Lower lobe of right lung (tissue), 2 donors: ENCODE measurements at regions of chr11 and their contacts with region 1.

Region 1: DNA sequence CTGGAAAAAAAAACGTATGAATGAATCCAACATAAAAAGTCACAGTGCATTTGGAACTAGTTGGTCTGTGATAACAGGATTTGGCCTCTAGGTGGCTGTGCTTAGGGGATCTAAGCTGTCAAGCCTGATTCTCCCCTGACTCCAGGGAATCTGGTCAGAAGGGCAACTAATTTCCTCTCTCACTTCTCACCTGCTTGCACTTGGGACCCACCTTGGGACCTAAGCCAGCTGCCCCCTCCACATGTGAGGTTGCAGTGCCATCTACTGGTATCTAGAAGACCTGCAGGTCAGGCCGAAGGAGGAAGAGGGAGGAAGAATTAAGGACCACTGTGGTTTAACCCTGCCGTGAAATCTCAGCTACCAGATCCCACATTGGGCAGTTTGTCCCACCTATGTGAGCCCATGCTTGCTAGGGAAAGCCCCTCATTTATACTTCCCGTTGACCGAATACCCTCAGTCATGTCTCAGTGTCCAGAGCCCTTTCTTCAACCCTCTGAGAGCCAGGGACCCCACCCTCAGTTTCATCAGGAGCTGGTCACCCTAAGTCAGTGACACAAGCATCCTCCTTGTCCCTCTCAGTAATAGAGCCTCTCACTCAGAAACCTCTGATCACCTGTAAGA is 33.2 kb upstream of the CAVIN3 start:
- DNase-seq: peak; percentile 60
- ATAC-seq: peak; percentile 81 to 88
- H3K4me3 ChIP-seq: no peak overlapping the region
- H3K27ac ChIP-seq: no peak overlapping the region
- H3K4me1 ChIP-seq: no peaks in the 10 kb centered on the region
- H3K27me3 ChIP-seq: no peaks in the 10 kb centered on the region
- CTCF ChIP-seq: peak; percentile 95

Region 2: DNA sequence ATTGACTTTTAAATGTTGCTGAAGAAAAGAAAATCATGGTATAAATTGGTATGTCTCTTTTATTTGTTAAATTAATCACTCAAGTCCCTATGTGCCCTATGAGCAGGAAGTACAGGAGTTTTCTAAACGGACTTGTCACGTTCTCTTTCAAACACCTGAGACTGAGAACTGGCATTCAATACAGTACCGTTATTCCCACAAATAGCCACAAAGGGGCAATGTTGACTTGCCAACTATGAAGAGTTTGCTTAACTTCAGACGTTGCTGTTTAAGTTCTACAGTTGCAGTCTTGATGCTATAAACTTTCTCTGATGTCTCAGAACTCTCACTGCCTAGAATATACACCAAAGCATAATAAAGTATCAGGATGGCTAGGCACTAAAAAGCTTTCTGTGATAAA is 330.5 kb before region 1 on chr11:
- intact Hi-C with region 1: loop called (anchors 10 kb)
- DNase-seq: no peak
- ATAC-seq: peak; percentile 56 to 64
- H3K4me3 ChIP-seq: no peak overlapping the region
- H3K27ac ChIP-seq: no peak overlapping the region
- H3K4me1 ChIP-seq: no peaks in the 10 kb centered on the region
- H3K27me3 ChIP-seq: no peaks in the 10 kb centered on the region
- CTCF ChIP-seq: peak; percentile 54